ENCODE measurements at regions of chr5 and their contacts with region 1.

Region 1: DNA sequence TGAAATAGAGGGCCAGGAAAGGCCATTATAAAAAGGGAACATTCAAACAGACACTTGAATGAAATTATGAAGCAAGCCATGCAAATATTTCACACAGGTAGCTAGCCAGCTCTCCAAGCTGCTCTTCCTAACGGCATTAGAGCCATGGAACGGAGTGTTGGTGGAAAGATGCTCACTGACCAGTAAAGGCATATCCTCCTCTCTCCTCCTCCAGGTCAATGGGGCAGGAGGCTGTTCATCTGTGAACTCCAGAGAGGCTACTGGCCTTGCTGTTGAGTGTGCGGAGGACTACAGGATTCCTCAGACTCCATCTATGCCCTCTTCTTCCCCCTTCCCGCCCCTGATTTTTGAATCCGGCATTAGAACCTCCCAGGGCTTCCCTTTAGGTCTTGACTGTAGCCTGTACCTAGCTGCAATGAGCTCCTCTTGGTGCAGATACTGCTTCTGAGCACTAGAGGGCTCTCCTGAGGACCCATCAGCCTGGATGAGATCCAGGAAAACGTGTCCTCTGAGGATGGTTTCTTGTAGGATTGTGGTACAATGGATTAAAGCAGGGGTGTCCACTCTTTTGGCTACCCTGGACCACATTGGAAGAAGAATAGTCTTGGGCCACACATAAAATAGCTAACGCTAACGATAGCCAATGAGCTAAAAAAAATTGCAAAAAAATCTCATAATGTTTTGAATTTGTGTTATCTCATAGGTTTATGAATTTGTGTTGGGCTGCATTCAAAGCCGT is 162.2 kb downstream of the SREK1 start:
- DNase-seq: peak; percentile 72
- H3K4me3 ChIP-seq: no peak overlapping the region
- H3K27ac ChIP-seq: no peak overlapping the region
- H3K4me1 ChIP-seq: peaks cover 4% of the 10 kb centered on the region
- H3K27me3 ChIP-seq: peaks cover 7 to 14% of the 10 kb centered on the region in 2 experiments
- CTCF ChIP-seq: peak; percentile 81 to 88
- POLR2A ChIP-seq: no peak

Region 2: GRCh38 chr5:66337626-66338226 is 31.5 kb after region 1 on chr5:
- CTCF ChIA-PET with region 1: interaction called, 12 read pairs
- POLR2A ChIA-PET with region 1: no interaction called
- dilution Hi-C with region 1: no loop called
- intact Hi-C with region 1: no loop called
- DNase-seq: no peak
- H3K4me3 ChIP-seq: no peak overlapping the region
- H3K27ac ChIP-seq: no peak overlapping the region
- H3K4me1 ChIP-seq: no peaks in the 10 kb centered on the region
- H3K27me3 ChIP-seq: peaks cover 0 to 2% of the 10 kb centered on the region in 2 experiments
- CTCF ChIP-seq: no peak
- POLR2A ChIP-seq: no peak

Region 3: GRCh38 chr5:66595756-66596635 is 289.7 kb after region 1 on chr5 and contains the start of gene MAST4:
- CTCF ChIA-PET with region 1: interaction called, 5 read pairs
- POLR2A ChIA-PET with region 1: no interaction called
- dilution Hi-C with region 1: no loop called
- intact Hi-C with region 1: loop called (anchors 5 kb)
- DNase-seq: peak; percentile 85
- H3K4me3 ChIP-seq: peak within 1 kb of the TSS; percentile 14 to 65 (median 30)
- H3K27ac ChIP-seq: no peak within 1 kb of the TSS
- H3K4me1 ChIP-seq: peaks cover 11% of the 10 kb centered on the region
- H3K27me3 ChIP-seq: peaks cover 51 to 72% of the 10 kb centered on the region in 2 experiments
- CTCF ChIP-seq: no peak
- POLR2A ChIP-seq: no peak
- total RNA-seq, gene MAST4: 116 and 120 TPM in 2 replicates

Region 4: DNA sequence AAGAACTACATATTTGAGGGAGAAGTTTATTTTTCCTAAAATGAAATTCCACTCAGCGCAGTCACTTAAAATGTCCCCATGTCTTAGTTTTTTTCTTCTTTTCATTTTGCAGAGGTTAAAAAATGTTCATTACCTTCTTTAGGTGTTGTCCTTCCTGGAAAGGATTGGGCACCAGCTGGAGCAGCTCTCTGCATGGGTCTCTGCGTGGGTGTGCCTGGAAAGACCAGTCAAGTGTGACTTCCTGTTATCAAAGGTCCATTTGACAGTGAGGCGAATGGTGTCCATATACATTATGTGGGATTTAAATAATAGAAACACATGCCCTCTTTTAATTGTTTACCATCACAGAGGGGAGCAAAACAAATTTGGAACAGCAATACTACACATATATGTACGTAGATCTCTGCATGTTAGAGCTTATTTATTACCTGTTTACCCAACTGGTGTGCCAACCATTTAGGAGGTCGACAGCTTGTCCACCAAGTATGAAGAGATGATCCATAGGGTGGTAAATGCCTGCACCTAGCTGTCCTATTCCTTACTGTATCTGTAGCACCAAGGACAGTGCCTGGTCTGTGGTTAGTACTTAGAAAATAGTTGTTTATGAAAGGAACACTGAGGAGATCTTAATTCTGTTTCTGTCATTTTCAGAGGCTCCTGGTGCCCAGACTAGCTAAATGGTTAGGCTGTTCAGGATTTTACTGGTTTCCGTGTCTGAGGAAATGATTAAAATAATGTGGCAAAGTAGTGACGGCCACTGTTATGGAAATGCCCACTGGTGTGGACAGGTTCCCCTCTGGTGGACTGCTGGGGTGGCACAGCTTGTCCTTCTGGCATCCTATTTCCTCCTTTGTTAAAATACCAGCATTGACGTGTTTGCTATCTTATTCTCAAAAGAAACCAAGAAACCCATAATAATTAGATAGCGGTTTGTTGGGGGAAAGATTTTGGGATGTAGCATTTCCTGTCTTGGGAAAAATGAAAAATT is 490.3 kb after region 1 on chr5:
- CTCF ChIA-PET with region 1: interaction called, 11 read pairs
- POLR2A ChIA-PET with region 1: no interaction called
- dilution Hi-C with region 1: no loop called
- intact Hi-C with region 1: loop called (anchors 1 kb)
- DNase-seq: no peak
- H3K4me3 ChIP-seq: no peak overlapping the region
- H3K27ac ChIP-seq: no peak overlapping the region
- H3K4me1 ChIP-seq: no peaks in the 10 kb centered on the region
- H3K27me3 ChIP-seq: peaks cover 20 to 30% of the 10 kb centered on the region in 2 experiments
- CTCF ChIP-seq: peak in 1 of 2 donors; percentile 7
- POLR2A ChIP-seq: no peak

Region 5: DNA sequence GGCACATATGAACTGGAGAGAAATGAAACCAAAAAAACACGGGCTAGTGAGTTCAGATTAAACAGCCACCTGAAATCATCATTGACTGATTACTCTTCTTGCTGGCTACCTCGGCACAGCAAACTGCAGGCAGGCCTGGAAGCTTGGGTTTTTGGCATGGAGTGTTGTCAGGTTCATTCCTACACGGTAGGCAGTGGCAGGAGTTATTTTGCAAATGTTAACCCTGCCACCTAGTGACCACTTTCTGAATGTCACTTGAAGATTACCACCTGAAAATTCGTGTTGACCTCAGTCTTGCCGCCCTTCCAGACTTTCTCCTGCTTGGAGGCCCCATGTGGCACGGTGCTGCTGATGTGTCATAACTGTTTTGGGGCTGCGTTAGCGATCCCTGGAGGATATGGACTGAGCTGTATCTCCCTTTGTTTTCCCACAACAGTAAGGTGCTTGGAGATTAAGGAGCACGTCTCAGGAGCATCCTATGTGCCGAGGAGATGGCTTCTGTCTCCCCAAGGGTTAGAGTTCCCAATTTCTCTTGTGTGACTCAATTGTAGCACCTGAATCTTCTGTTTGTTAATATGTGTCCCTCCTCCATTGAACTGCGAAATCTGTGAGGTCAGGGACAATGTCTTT is 903.0 kb after region 1 on chr5:
- CTCF ChIA-PET with region 1: interaction called, 22 read pairs
- POLR2A ChIA-PET with region 1: no interaction called
- dilution Hi-C with region 1: no loop called
- intact Hi-C with region 1: loop called (anchors 1 kb)
- DNase-seq: peak; percentile 77
- H3K4me3 ChIP-seq: no peak overlapping the region
- H3K27ac ChIP-seq: no peak overlapping the region
- H3K4me1 ChIP-seq: peaks cover 3% of the 10 kb centered on the region
- H3K27me3 ChIP-seq: no peaks in the 10 kb centered on the region
- CTCF ChIP-seq: peak; percentile 67
- POLR2A ChIP-seq: no peak

Measured in endothelial cell of umbilical vein (primary cell).